ENCODE measurements at regions of chr4 and their contacts with region 1.

Region 1: GRCh38 chr4:68249434-68249833 is 3.9 kb upstream of the TMPRSS11B start:
- DNase-seq: no peak
- H3K4me3 Mint-ChIP-seq: no peak overlapping the region
- H3K27ac Mint-ChIP-seq: peak overlapping the region; percentile 88
- H3K4me1 Mint-ChIP-seq: peaks cover 17% of the 10 kb centered on the region
- H3K27me3 Mint-ChIP-seq: peaks cover 3% of the 10 kb centered on the region

Region 2: DNA sequence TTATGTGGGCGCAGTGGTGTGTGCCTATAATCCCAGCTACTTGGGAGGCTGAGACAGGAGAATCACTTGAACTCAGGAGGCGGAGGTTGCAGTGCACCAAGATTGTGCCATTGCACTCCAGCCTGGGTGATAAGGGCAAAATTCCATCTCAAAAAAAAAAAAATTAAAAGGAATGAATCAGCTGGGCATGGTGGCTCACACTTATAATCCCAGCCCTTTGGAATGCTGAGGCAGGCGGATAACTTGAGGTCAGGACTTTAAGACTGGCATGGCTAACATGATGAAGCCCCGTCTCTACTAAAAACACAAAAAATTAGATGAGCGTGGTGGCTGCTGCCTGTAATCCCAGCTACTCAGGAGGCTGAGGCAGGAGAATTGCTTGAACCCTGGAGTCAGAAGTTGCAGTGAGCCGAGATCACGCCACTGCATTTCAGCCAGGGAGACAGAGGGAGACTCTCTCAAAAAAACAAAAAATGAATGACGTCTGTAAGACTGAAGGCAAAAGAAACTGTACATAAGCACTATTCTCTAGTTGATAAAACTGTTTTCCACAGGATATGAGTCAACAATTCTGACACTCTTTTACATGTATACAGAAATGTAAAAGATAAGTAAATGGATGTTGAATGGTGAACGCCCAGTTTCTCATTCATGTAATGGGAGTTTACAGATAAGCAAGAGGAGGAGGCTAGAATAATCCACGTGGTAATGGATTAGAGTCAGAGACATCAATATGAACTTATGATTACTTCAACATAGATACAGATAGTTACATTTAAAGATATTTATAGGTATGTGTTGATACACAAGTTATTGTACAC is 726.4 kb before region 1 on chr4:
- CTCF ChIA-PET with region 1: no interaction called
- POLR2A ChIA-PET with region 1: no interaction called
- intact Hi-C with region 1: loop called (anchors 1 kb)
- DNase-seq: peak; percentile 43
- H3K4me3 Mint-ChIP-seq: peak overlapping the region; percentile 26
- H3K27ac Mint-ChIP-seq: peak overlapping the region; percentile 94
- H3K4me1 Mint-ChIP-seq: peaks cover 67% of the 10 kb centered on the region
- H3K27me3 Mint-ChIP-seq: no peaks in the 10 kb centered on the region

Region 3: DNA sequence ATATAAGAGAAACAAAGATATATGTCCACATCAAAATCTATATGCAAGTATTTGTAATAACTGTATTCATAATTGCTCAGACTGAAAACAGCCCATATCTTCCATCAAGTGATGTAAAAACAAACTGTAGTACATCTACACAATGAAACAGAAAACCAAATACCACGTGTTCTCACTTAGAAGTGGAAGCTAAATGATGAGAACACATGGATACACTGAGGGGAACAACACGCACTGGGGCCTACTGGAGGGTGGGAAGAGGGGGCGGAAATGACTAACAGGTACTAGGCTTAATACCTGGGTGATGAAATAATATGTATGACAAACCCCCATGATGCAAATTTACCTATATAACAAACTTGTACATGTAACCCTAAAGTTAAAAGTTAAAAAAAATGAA is 591.1 kb before region 1 on chr4:
- CTCF ChIA-PET with region 1: no interaction called
- POLR2A ChIA-PET with region 1: no interaction called
- intact Hi-C with region 1: loop called (anchors 1 kb)
- DNase-seq: peak; percentile 63
- H3K4me3 Mint-ChIP-seq: no peak overlapping the region
- H3K27ac Mint-ChIP-seq: peak overlapping the region; percentile 63
- H3K4me1 Mint-ChIP-seq: peaks cover 24% of the 10 kb centered on the region
- H3K27me3 Mint-ChIP-seq: no peaks in the 10 kb centered on the region

Region 4: DNA sequence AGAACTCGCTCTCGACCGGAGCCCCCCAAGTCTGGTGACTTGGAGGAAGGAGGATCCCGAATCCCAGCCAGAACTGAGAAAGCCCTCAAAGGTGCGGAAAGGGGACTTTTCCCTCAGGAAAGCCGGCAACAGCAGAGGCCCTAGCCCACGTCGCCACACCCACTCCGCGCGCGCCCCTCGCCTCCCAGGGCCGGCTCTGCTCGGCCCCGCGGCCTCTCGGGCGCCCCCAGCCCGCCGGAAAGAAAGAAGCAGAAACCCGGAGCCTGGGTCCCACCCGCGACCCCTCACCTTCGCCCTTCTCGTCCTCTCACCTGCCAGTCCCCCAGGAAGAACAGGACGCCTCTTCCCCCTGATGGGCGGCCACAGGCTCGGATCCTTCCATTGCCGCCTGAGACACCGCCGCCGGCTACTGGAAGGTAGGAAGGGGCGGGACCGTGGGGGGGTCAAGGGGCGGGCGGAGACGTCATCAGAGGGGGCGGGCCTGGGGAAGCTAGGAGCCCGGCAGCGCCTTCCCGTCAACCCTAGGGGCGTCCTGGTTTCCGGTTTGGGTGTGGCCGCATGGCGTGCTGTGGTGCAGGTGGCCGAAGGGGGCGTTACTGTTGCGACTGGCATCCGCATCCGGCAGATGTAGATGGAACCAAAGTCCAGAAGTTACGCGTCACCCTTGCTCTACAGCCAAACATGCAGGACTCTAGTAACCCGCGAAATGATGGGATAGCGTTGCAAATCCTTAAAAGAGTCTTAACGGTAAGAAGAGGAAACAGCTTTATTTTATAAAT is 548.5 kb before region 1 on chr4 and contains the start of gene UBA6:
- CTCF ChIA-PET with region 1: no interaction called
- POLR2A ChIA-PET with region 1: no interaction called
- intact Hi-C with region 1: loop called (anchors 5 kb)
- DNase-seq: peak; percentile 98
- H3K4me3 Mint-ChIP-seq: peak within 1 kb of the TSS; percentile 92
- H3K27ac Mint-ChIP-seq: peak within 1 kb of the TSS; percentile 90
- H3K4me1 Mint-ChIP-seq: peaks cover 55% of the 10 kb centered on the region
- H3K27me3 Mint-ChIP-seq: no peaks in the 10 kb centered on the region
- total RNA-seq, gene UBA6: 107 to 112 TPM

Region 5: DNA sequence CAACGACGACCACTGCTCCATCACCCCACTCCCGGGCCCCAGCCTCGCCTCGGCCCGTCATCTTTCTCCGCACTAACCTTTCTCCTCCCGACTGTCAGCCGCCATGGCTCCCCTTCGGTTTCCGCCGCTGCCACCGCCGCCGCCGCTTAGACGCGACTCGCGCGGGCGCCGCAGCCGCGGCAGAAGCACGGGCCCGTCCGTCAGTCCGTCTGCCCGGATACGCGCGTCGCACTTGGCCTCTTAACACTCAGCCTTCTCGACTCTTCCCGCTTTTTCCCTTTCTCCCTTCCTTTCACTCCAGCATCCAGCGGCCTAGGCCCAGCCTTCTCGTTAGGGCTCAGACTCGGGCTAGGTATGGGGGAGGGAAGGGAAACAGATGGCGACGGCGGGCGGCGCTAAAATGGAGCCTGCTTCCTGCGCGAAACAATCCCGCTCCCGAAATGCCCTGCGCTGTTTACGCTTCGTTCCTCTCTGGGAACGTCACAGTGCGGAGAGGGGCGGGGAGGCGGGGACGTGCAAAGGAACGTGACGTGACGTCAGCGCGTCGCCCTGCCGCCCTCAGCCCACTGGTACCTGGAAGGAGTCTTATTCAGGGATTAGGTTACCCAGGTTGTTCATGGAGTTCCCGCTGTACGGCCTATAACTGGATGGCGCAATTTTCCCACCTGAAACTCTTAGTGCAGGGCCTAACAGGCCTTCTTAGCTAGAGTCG is 100.4 kb after region 1 on chr4 and contains the start of gene YTHDC1:
- CTCF ChIA-PET with region 1: no interaction called
- POLR2A ChIA-PET with region 1: no interaction called
- intact Hi-C with region 1: loop called (anchors 1 kb)
- DNase-seq: peak; percentile 97
- H3K4me3 Mint-ChIP-seq: peak within 1 kb of the TSS; percentile 97
- H3K27ac Mint-ChIP-seq: peak within 1 kb of the TSS; percentile 98
- H3K4me1 Mint-ChIP-seq: peaks cover 33% of the 10 kb centered on the region
- H3K27me3 Mint-ChIP-seq: no peaks in the 10 kb centered on the region
- total RNA-seq, gene YTHDC1: 66.8 to 68.5 TPM

Measured in activated CD4-positive, alpha-beta memory T cell treated with anti-CD3 and anti-CD28 coated beads for 36 hours (primary cell).